Activated CD4-positive, alpha-beta memory T cell treated with anti-CD3 and anti-CD28 coated beads for 36 hours (primary cell): ENCODE measurements at regions of chr2 and their contacts with region 1.

Region 1: DNA sequence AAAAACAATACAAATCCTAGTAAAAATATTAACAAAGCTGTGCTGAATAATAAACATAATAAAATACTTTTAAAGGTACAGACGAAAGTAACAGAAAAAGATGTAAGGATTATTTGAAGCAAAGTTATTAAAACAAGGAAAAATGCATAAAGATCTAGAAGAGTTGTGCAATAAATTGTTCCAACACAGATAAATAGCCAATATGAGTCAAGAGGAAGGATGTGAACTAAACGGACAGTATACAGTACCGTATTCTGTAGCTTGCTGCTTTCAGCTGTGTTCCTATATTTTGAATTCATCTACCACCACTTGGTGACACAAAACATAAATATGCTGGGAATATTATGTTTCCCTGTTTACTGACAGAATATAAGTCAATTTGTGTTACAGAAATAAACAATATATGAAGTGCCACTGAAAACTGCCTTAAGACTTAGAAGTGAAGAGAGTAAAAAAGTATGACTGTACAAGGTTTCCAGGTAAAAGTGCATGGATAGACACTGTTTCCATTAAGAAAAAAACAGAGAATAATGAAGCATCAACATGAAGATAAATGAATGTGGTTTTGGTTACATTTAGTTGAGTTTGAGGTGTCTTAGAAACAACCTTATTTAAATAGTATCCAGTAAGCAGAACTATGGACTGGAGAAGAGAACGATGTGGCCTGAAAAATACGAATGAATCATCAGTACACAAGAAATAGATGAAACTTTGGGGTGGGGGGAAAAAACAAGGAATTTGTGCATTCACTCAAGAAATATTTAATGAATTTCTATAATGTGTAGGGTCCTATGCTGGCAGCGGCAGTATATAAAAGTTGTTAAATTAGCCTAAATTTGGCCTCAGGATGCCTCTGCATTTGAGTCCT is 13.1 kb downstream of the PPP3R1 start:
- DNase-seq: no peak
- H3K4me3 Mint-ChIP-seq: no peak overlapping the region
- H3K27ac Mint-ChIP-seq: peak overlapping the region; percentile 64
- H3K4me1 Mint-ChIP-seq: peaks cover 73% of the 10 kb centered on the region
- H3K27me3 Mint-ChIP-seq: no peaks in the 10 kb centered on the region

Region 2: DNA sequence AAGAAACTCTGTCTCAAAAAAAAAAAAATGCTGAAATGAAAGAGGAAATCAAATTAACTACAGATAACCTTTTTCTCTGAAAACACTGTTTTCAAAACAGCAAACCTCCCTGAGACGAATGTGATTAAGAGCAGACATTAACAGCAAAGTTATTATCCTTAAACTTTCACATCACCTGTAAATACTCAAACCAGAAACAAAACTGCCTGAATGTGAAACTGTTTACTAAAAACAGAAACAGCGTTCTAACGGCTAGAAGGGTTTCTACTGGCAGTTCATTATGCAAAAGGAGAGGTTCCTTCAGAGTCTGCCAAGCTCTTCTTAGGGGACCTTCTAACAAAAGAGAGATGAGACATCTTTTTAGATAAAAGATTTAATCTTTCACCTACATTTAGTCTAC is 35.6 kb before region 1 on chr2:
- CTCF ChIA-PET with region 1: interaction called, 6 read pairs
- POLR2A ChIA-PET with region 1: no interaction called
- intact Hi-C with region 1: loop called (anchors 5 kb)
- DNase-seq: no peak
- H3K4me3 Mint-ChIP-seq: peak overlapping the region; percentile 51
- H3K27ac Mint-ChIP-seq: peak overlapping the region; percentile 84
- H3K4me1 Mint-ChIP-seq: peaks cover 72% of the 10 kb centered on the region
- H3K27me3 Mint-ChIP-seq: no peaks in the 10 kb centered on the region

Region 3: DNA sequence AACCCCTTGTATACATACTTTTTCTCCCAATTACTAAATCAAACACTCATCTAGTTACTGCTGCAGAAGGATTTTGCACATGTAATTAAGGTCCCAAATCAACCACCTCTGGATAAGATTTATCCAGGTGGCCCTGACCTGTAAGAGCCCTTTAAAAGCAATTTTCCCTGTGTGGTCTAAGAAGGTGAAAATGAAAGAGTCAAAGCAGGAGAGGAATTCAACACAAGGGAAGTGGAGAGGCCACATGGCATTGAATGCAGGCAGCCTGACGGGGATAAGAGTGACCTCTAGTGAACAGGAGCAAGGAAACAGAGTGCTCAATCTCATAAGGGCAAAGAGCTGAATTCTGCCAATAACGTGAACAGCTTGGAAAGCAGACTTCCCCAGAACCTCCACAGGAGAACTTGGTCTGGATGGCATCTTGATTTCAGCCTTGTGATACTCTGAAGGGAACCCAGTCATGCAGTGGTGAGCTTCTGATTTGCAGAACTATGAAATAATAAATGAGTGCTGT is 14.0 kb before region 1 on chr2:
- CTCF ChIA-PET with region 1: interaction called, 3 read pairs
- POLR2A ChIA-PET with region 1: no interaction called
- intact Hi-C with region 1: loop called (anchors 2 kb)
- DNase-seq: peak; percentile 22
- H3K4me3 Mint-ChIP-seq: no peak overlapping the region
- H3K27ac Mint-ChIP-seq: peak overlapping the region; percentile 11
- H3K4me1 Mint-ChIP-seq: peaks cover 86% of the 10 kb centered on the region
- H3K27me3 Mint-ChIP-seq: no peaks in the 10 kb centered on the region

Region 4: GRCh38 chr2:68282811-68283418 is 43.7 kb after region 1 on chr2:
- CTCF ChIA-PET with region 1: no interaction called
- POLR2A ChIA-PET with region 1: no interaction called
- intact Hi-C with region 1: loop called (anchors 2 kb)
- DNase-seq: no peak
- H3K4me3 Mint-ChIP-seq: no peak overlapping the region
- H3K27ac Mint-ChIP-seq: no peak overlapping the region
- H3K4me1 Mint-ChIP-seq: no peaks in the 10 kb centered on the region
- H3K27me3 Mint-ChIP-seq: peaks cover 7% of the 10 kb centered on the region